ENCODE measurements at regions of chr6 and their contacts with region 1.

Region 1: DNA sequence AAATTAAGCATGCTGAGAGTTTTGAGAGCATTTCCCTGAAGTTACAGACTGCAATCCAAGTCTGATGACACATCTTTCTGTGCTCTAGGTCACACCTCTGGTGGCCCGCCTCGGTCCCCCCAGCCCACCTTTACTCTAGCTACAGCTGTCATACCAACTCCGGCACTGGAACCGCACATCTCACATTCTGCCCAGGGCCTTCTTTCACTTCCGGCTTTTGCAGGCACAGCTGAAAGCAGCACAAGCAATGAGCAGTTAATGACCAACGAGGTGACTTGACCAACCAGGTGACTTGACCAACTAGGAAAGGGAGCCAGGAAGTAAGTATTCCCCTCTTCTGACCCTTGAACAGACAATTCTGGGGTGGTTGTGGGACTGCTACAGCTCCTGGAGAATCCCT is 88.6 kb upstream of the MOCS1 start:
- DNase-seq: no peak
- ATAC-seq: no peak
- H3K4me3 ChIP-seq: no peak overlapping the region
- H3K27ac ChIP-seq: no peak overlapping the region
- H3K4me1 ChIP-seq: no peaks in the 10 kb centered on the region
- H3K27me3 ChIP-seq: no peaks in the 10 kb centered on the region
- CTCF ChIP-seq: no peak
- EP300 ChIP-seq: no peak
- POLR2A ChIP-seq: no peak
- RAD21 ChIP-seq: no peak

Region 2: DNA sequence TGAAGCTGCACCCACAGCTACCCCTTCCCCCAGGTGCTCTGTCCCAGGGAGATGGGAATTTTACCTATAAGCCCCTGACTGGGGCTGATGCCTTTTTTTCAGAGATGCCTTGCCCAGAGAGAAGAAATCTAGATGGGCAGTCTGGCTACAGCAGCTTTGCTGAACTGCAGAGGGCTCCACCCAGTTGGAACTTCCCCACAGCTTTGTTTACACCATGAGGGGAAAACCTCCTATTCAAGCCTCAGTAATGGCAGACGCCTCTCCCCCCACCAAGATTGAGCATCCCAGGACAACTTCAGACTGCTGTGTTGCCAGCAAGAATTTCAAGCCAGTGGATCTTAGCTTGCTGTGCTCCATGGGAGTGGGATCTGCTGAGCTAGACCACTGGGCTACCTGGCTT is 34.0 kb after region 1 on chr6:
- CTCF ChIA-PET with region 1: no interaction called
- POLR2A ChIA-PET with region 1: no interaction called
- in situ Hi-C with region 1: no loop called
- intact Hi-C with region 1: loop called (anchors 1 kb)
- DNase-seq: no peak
- ATAC-seq: no peak
- H3K4me3 ChIP-seq: no peak overlapping the region
- H3K27ac ChIP-seq: no peak overlapping the region
- H3K4me1 ChIP-seq: no peaks in the 10 kb centered on the region; a peak in 1 of 5 replicates
- H3K27me3 ChIP-seq: no peaks in the 10 kb centered on the region
- CTCF ChIP-seq: peak in 1 of 3 experiments; percentile 30; a peak in 1 of 6 replicates
- EP300 ChIP-seq: no peak
- POLR2A ChIP-seq: no peak
- RAD21 ChIP-seq: 0 out of 4 replicates have a peak, but pooled peaks of 1 of the 2 experiments have one; percentile 9

Measured in K562 (cell line).